Left cardiac atrium (tissue), 4 donors: ENCODE measurements at regions of chr3 and their contacts with region 1.

Region 1: GRCh38 chr3:53293867-53294266 is 38.0 kb upstream of the TKT start:
- DNase-seq: no peak
- ATAC-seq: peak; percentile 51 to 72

Region 2: GRCh38 chr3:53493963-53494791 is 200.3 kb after region 1 on chr3 and contains the start of gene CACNA1D:
- intact Hi-C with region 1: loop called in 1 of 2 experiments (anchors 10 kb)
- DNase-seq: no peak
- ATAC-seq: peak; percentile 25 to 42
- total RNA-seq, gene CACNA1D: 2.4 to 6.9 TPM

Region 3: DNA sequence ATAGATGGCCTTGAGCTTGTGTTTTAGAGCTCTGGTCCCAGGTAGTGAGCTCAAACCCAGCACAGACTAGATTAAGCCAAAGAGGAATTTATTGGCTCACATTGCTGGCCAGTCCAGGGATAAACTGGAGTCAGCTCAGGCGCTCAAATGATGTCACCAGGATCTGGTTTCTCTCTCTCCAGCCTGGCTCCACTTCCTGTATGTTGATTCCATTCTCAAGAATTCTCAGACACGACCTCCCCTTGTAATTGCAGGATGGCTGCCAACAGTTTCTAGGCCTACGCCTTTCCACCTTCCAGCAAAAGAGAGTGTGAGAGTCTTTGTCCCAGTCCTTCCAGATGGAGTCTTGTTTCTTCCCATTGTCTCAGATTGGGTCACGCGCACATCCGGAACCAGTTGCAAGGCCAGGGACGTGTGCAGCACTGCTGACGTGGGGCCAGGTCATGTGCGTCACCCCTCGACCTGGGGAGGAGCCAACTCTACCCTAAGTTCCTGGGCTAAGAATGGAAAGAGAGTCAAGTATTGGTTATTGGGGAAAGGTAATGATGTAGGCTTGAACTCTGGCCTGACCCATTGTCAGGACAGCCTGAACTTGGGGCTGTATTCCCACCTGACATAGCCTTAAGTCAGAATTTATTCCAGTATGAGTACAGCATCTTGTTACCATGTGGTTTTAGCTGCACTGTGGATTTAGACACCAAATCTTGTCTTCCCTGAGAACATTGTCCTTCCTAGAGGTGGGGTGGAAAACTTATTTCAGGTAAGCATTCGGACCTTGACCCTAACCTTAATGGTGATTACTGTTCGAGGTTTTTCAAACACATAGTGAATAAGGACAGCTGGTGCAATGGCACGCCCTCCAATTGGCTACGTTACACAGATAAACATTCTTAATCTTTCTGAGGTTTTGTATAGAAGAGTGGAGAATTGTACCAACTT is 232.2 kb after region 1 on chr3:
- intact Hi-C with region 1: no loop called
- DNase-seq: peak; percentile 41
- ATAC-seq: peak; percentile 41 to 79